ENCODE measurements at regions of chr9 and their contacts with region 1.

Region 1: DNA sequence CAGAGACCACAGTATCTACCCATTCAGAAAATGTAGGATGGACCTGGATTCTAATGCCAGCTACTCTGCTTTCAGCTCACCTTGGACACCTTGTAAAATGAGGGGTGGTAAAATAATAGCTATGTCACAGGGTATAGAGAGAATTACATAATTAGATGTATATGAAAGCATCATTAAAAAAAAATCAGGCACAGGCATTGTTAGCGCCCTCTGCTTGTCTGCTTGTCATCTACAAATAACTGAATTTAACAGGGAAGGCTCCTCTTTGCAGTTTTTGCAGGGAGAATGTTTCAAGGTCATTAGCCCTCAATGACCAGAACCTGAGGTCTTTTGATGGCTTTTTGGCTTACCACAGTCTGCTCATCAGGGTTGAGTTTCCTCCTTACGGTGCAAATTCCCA is 58.0 kb downstream of the GPR21 start:
- DNase-seq: no peak
- ATAC-seq: peak in 1 of 2 experiments; percentile 23; a peak in 1 of 6 replicates
- H3K4me3 ChIP-seq: no peak overlapping the region
- H3K27ac ChIP-seq: no peak overlapping the region
- H3K4me1 ChIP-seq: no peaks in the 10 kb centered on the region
- CTCF ChIP-seq: peak; percentile 34
- EP300 ChIP-seq: no peak
- POLR2A ChIP-seq: no peak
- RAD21 ChIP-seq: no peak

Region 2: DNA sequence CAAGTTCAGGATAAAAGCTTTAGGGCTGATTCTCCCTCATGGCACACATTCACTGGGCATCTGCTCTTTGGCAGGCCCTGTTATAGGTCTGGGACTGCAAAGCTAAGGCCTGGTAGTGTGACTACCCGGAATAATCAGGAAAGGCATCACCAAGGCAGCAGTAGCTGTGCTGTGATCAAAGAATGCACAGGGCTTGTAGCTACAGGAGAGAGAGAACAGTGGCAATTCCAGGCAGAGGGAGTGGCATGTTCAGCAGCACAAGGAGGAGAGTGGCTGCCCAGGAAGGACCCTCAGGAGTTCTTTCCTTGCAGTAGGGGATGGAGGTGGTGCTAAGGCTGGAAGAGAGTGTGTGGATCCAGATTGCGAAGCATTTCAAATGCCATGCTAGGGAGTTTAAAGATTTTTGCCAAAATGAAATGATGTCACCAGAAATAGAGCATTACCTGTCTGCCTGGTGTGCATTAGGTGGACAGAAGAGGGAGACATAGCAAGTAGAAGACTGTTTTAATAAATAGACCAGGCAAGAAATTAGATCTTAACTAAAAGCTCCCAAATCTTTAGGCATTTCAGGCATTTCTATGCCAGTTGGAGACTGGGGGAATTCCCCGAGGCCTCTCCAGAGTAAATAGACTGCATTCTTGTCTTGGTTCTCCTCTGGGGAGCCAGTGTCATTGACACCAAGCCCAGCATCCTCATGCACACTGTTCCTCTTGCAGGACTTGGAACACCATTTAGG is 11.1 kb after region 1 on chr9:
- CTCF ChIA-PET with region 1: interaction called, 40 read pairs
- POLR2A ChIA-PET with region 1: no interaction called
- DNase-seq: no peak
- ATAC-seq: peak in 1 of 2 experiments; percentile 50; a peak in 3 of 6 replicates
- H3K4me3 ChIP-seq: no peak overlapping the region
- H3K27ac ChIP-seq: no peak overlapping the region
- H3K4me1 ChIP-seq: peaks cover 16% of the 10 kb centered on the region; the same call in 2 of the 3 replicates
- CTCF ChIP-seq: no peak; the same call in 2 of the 3 replicates
- EP300 ChIP-seq: no peak
- POLR2A ChIP-seq: no peak
- RAD21 ChIP-seq: peak; percentile 27 to 34; a peak in 1 of 5 replicates

Region 3: GRCh38 chr9:123234853-123235252 is 143.4 kb after region 1 on chr9:
- CTCF ChIA-PET with region 1: no interaction called
- POLR2A ChIA-PET with region 1: no interaction called
- DNase-seq: no peak
- ATAC-seq: no peak
- H3K4me3 ChIP-seq: no peak overlapping the region
- H3K27ac ChIP-seq: no peak overlapping the region
- H3K4me1 ChIP-seq: 0 out of 3 replicates have a peak, but pooled peaks cover 4% of the 10 kb centered on the region
- CTCF ChIP-seq: no peak
- EP300 ChIP-seq: no peak
- POLR2A ChIP-seq: no peak
- RAD21 ChIP-seq: no peak